Activated CD4-positive, alpha-beta T cell treated with anti-CD3 and anti-CD28 coated beads for 36 hours (primary cell): ENCODE measurements at regions of chr9 and their contacts with region 1.

Region 1: DNA sequence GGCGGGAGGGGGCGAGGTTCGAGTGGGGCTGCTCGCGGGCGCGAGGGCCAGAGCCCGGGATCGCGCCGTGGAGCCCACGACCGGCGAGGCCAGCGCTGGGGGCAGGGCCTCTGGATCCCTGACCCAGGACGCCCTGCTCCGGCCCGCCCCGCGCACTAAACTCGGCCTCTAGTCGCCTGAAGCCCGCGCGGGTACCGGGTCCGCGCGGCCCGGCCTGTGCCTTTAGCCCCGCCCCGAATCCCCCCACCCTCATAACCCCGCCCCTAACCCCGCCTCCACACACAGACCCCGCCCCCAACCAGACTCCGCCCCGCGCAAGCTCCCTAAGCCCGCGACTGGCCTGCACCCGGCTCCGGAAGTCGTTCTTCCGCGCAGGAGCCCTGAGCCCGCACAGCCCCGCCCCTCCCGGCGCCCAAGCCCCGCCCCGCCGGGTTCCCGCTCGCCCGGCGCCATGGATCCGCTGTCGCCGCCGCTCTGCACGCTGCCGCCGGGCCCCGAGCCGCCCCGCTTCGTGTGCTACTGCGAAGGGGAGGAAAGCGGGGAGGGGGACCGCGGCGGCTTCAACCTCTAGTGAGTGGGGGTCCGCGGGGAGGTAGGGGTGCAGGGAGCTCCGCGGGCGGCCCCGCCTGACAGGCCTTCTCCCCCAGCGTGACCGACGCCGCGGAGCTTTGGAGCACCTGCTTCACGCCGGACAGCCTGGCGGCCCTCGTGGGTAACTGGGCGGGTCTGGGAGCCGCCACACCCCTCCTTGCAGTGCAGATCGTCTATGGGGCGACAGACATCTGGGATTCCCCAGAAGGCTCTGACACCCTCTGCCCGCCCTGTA is at the start of gene PAXX:
- DNase-seq: peak; percentile 98
- ATAC-seq: peak; percentile 95
- H3K4me3 Mint-ChIP-seq: peak within 1 kb of the TSS; percentile 81
- H3K27ac Mint-ChIP-seq: peak within 1 kb of the TSS; percentile 70
- H3K4me1 Mint-ChIP-seq: peaks cover 22% of the 10 kb centered on the region
- H3K27me3 Mint-ChIP-seq: peaks cover 4% of the 10 kb centered on the region
- total RNA-seq, gene PAXX: 52.7 to 67.1 TPM

Region 2: GRCh38 chr9:136345281-136346156 is 646.7 kb before region 1 on chr9:
- CTCF ChIA-PET with region 1: no interaction called
- POLR2A ChIA-PET with region 1: no interaction called
- intact Hi-C with region 1: no loop called
- DNase-seq: no peak
- ATAC-seq: no peak
- H3K4me3 Mint-ChIP-seq: no peak overlapping the region
- H3K27ac Mint-ChIP-seq: no peak overlapping the region
- H3K4me1 Mint-ChIP-seq: no peaks in the 10 kb centered on the region
- H3K27me3 Mint-ChIP-seq: no peaks in the 10 kb centered on the region

Region 3: DNA sequence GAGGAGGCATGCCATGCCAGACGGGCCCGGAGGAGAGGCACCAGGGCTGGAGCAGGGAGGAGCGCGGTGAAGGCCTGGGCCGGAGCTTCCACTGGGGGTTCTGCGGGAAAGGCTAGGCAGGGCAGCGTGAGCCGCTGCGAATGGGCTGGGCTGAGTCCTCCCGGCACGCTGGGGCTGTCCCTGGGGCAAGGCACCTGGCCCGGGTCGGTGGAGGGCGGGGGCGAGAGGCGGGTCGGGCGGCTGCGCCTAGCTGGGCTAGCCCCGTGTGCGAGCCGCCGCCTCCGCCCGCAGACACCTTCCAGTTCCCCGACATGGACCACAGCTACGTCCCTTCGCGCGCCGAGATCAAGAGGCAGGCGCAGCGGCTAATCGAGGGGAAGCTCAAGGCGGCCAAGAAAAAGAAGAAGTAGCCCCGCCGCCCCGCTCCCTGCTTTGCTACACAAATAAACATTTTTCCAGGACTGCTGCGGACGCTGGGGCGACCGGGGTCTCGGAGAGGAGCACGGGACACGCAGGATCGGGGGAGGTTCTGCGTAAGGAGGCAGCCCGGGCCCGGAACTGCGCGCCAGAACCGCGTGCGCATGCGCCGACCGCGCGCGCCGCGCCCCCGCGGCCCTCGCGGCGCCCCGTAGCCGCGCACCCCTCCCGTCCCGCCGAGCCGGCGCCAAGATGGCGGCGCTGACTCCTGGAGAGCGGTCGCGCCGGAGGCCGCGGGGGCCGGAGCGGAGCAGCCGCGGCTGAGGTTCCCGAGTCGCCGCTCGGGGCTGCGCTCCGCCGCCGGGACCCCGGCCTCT is 184.7 kb before region 1 on chr9 and contains the start of gene RABL6:
- CTCF ChIA-PET with region 1: no interaction called
- POLR2A ChIA-PET with region 1: no interaction called
- intact Hi-C with region 1: loop called in 1 of 2 experiments (anchors 1 kb)
- DNase-seq: peak; percentile 86
- ATAC-seq: peak; percentile 88
- H3K4me3 Mint-ChIP-seq: peak within 1 kb of the TSS; percentile 81
- H3K27ac Mint-ChIP-seq: peak within 1 kb of the TSS; percentile 88
- H3K4me1 Mint-ChIP-seq: peaks cover 33% of the 10 kb centered on the region
- H3K27me3 Mint-ChIP-seq: no peaks in the 10 kb centered on the region
- total RNA-seq, gene RABL6: 66.2 to 71.8 TPM

Region 4: GRCh38 chr9:136928591-136928990 is 63.6 kb before region 1 on chr9:
- CTCF ChIA-PET with region 1: no interaction called
- POLR2A ChIA-PET with region 1: no interaction called
- intact Hi-C with region 1: no loop called
- DNase-seq: no peak
- ATAC-seq: no peak
- H3K4me3 Mint-ChIP-seq: no peak overlapping the region
- H3K27ac Mint-ChIP-seq: no peak overlapping the region
- H3K4me1 Mint-ChIP-seq: peaks cover 17% of the 10 kb centered on the region
- H3K27me3 Mint-ChIP-seq: no peaks in the 10 kb centered on the region

Region 5: DNA sequence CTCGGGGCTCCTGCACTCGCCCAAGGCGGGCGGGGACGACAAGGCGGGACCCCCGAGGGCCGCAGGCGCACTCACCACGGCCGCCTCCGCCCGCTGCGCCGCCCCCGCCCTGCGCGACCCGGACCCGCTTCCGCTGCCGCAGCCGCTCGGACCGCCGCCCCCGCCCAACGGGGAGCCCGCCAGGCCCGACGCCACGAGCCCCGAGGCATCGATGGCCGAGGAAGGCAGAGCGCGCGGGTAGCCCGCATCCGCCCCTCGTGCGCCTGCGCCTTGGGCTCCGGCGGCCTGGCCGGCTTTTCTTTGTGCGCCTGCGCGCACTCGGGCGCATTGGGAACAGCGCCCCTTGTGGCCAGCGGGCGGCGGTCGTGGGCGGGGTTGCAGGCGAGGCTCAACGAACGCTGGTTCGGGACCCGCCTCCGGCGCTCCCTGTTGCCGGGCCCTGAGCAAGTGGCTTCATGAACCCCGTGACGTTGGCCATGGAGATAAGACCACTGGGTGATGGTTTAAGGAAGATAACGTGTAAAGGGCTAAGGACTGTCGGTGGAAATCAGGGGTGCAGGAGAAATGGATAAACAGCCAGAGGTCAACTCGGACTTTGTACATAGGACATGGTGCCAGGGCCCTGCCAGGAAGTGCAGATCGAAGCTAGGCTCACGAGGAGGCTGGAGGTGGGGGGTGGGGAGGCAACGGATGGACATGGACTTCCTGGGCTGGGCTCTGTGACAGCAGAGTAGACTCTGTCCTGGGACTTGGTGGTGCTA is 47.5 kb before region 1 on chr9 and contains the starts of genes C8G and FBXW5:
- CTCF ChIA-PET with region 1: no interaction called
- POLR2A ChIA-PET with region 1: no interaction called
- intact Hi-C with region 1: loop called in 1 of 2 experiments (anchors 1 kb)
- DNase-seq: peak; percentile 97
- ATAC-seq: peak; percentile 84
- H3K4me3 Mint-ChIP-seq: peak within 1 kb of the TSS; percentile 77
- H3K27ac Mint-ChIP-seq: peak within 1 kb of the TSS; percentile 88
- H3K4me1 Mint-ChIP-seq: peaks cover 9% of the 10 kb centered on the region
- H3K27me3 Mint-ChIP-seq: no peaks in the 10 kb centered on the region
- total RNA-seq, gene C8G: 0.77 TPM in 1 of 2 experiments, not detected in the other
- total RNA-seq, gene FBXW5: 54.4 to 66.4 TPM

Region 6: GRCh38 chr9:136978073-136978864 is 13.9 kb before region 1 on chr9:
- CTCF ChIA-PET with region 1: interaction called, 15 read pairs
- POLR2A ChIA-PET with region 1: interaction called, 4 read pairs
- intact Hi-C with region 1: loop called (anchors 1 kb)
- DNase-seq: peak; percentile 87
- ATAC-seq: peak; percentile 47
- H3K4me3 Mint-ChIP-seq: no peak overlapping the region
- H3K27ac Mint-ChIP-seq: no peak overlapping the region
- H3K4me1 Mint-ChIP-seq: peaks cover 13% of the 10 kb centered on the region
- H3K27me3 Mint-ChIP-seq: no peaks in the 10 kb centered on the region

Region 7: DNA sequence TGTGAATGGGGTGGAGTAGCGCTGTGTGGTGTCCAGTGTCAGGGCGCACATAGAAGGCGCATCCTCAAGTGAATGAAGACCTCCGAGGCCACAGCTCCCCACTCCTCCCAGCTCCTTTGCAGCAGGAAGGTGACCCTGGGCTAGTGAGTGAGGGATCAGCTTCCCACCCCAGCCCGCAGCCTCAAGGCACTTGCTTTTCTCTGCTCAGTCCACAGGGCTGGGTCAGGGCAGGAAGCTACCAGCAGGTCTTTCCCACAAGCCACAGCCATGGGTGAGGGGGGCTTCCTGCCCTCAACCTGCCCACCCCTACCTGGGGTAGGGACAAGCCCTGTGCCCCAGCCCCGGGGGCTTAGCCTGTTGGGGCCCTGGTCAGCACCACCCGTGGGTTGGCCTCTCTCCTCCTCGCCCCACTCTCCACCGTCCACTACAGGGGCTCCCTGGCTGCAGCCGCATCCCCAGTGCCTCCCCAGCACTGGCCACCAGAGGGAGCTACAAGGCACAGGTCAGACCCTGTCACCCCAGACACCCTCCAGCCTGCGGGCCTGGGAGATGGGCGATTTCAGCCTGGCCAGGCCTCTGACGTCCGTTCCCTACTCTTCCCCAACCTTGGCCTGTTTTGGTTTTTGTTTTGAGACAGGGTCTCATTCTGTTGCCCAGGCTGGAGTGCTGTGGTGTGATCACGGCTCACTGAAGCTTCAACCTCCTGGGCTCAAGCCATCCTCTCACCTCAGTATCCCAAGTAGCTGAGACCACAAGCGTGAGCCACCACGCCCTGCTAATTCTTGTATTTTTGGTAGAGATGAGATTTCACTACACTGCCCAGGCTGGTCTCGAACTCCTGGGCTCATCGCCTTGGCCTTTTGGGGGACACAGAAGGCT is 37.1 kb after region 1 on chr9:
- CTCF ChIA-PET with region 1: interaction called, 11 read pairs
- POLR2A ChIA-PET with region 1: interaction called, 3 read pairs
- intact Hi-C with region 1: no loop called
- DNase-seq: peak; percentile 88
- ATAC-seq: peak; percentile 52
- H3K4me3 Mint-ChIP-seq: peak overlapping the region; percentile 60
- H3K27ac Mint-ChIP-seq: peak overlapping the region; percentile 42
- H3K4me1 Mint-ChIP-seq: peaks cover 46% of the 10 kb centered on the region
- H3K27me3 Mint-ChIP-seq: no peaks in the 10 kb centered on the region

Region 8: GRCh38 chr9:137086531-137087408 is 94.6 kb after region 1 on chr9 and contains the start of gene MAN1B1:
- CTCF ChIA-PET with region 1: no interaction called
- POLR2A ChIA-PET with region 1: interaction called, 5 read pairs
- intact Hi-C with region 1: loop called in 1 of 2 experiments (anchors 1 kb)
- DNase-seq: peak; percentile 100
- ATAC-seq: peak; percentile 85
- H3K4me3 Mint-ChIP-seq: peak within 1 kb of the TSS; percentile 88
- H3K27ac Mint-ChIP-seq: peak within 1 kb of the TSS; percentile 96
- H3K4me1 Mint-ChIP-seq: peaks cover 46% of the 10 kb centered on the region
- H3K27me3 Mint-ChIP-seq: no peaks in the 10 kb centered on the region
- total RNA-seq, gene MAN1B1: 21.6 to 26.7 TPM

Region 9: DNA sequence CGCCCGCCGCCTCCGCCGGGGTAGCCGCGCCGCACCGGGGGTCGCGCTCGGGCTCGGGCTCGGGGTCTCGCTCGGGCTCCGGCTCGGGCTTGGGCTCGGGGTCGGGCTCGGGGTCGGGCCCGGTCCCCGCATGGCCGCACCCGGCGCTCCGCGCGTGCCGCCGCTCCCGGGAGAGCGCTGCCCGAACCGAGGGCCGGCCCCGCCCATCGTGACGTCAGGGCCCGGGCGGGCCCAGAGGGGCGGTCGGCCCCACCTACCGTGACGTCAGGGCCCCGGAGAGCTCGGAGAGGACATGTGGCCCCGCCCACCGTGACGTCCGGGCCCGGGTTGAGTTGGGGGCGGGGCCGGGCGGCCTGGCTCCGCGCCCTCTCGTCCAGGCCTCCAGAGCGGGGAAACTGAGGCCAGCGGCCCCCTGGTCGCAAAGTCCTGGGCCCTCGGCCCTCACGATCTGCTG is 467.0 kb after region 1 on chr9 and contains the start of gene NSMF:
- CTCF ChIA-PET with region 1: no interaction called
- POLR2A ChIA-PET with region 1: no interaction called
- intact Hi-C with region 1: loop called in 1 of 2 experiments (anchors 1 kb)
- DNase-seq: peak; percentile 98
- ATAC-seq: peak; percentile 66
- H3K4me3 Mint-ChIP-seq: peak within 1 kb of the TSS; percentile 39
- H3K27ac Mint-ChIP-seq: peak within 1 kb of the TSS; percentile 78
- H3K4me1 Mint-ChIP-seq: peaks cover 33% of the 10 kb centered on the region
- H3K27me3 Mint-ChIP-seq: no peaks in the 10 kb centered on the region
- total RNA-seq, gene NSMF: 63.6 to 65.0 TPM

Region 10: GRCh38 chr9:137647096-137647714 is 655.0 kb after region 1 on chr9:
- CTCF ChIA-PET with region 1: no interaction called
- POLR2A ChIA-PET with region 1: no interaction called
- intact Hi-C with region 1: no loop called
- DNase-seq: no peak
- ATAC-seq: peak; percentile 55
- H3K4me3 Mint-ChIP-seq: no peak overlapping the region
- H3K27ac Mint-ChIP-seq: peak overlapping the region; percentile 38
- H3K4me1 Mint-ChIP-seq: peaks cover 41% of the 10 kb centered on the region
- H3K27me3 Mint-ChIP-seq: no peaks in the 10 kb centered on the region